ENCODE measurements at regions of chr3 and their contacts with region 1.

Region 1: GRCh38 chr3:9826815-9827567 is 16.8 kb downstream of the RPUSD3 start:
- DNase-seq: peak; percentile 44 to 69
- ATAC-seq: peak; percentile 87 to 93
- H3K4me3 ChIP-seq: no peak overlapping the region
- H3K27ac ChIP-seq: no peak overlapping the region
- H3K4me1 ChIP-seq: no peaks in the 10 kb centered on the region
- CTCF ChIP-seq: peak; percentile 46
- EP300 ChIP-seq: no peak
- POLR2A ChIP-seq: no peak
- RAD21 ChIP-seq: peak; percentile 52 to 67

Region 2: DNA sequence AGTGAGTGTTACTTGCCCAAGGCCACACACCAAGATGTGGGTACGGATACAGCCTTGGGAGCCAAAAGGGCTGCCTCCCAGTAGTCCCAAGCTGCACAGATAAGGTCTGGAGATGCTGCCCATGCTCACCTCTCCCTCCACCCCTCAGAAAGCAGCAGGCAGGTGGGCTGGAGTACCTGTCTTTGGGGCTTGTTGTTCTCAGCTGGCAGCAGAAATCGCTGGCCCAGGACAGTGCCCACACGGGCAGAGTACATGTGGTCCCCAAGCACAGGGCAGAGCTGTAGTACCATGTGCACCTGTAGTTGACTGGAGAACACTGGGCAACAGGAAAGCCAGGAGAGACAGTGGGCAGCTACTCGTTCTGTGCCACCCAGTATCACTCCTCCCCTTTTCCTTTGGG is 11.9 kb after region 1 on chr3:
- CTCF ChIA-PET with region 1: interaction called, 21 read pairs
- POLR2A ChIA-PET with region 1: no interaction called
- DNase-seq: no peak
- ATAC-seq: no peak
- H3K4me3 ChIP-seq: no peak overlapping the region
- H3K27ac ChIP-seq: no peak overlapping the region
- H3K4me1 ChIP-seq: peaks cover 8% of the 10 kb centered on the region; the same call in 2 of the 3 replicates
- CTCF ChIP-seq: no peak
- EP300 ChIP-seq: no peak
- POLR2A ChIP-seq: no peak
- RAD21 ChIP-seq: no peak

Region 3: DNA sequence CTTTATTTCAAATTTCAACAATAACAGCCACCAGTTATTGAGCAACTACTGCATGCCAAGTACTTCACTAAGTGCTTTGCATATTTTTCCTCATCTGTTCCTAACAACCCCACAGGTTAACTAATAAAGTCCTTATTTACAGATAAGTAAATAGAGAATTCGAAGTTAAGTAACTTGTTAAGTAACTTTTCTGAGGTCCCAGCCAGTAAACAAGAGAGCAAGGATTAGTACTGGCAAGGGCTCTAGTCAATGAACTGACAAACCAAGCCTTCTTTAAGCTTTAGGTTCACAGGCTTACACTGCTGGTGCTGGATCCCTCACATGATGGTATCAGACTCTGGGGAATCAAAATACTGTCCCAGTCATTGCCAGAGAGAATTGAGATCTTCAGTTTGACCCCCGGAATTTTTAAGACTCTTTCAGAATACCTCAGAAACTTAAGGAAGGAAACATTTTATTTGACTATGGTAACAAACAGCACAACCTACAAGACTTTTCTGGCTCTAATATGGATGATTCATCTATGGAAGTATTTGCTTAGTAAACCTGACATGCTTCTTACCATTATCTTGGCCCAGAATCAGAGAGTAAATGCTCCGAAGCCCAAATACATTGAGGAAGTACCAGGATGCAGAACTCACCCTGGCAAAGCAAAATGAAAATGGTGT is 143.2 kb after region 1 on chr3:
- CTCF ChIA-PET with region 1: no interaction called
- POLR2A ChIA-PET with region 1: no interaction called
- DNase-seq: peak in 1 of 2 experiments; percentile 55
- ATAC-seq: peak; percentile 90 to 91
- H3K4me3 ChIP-seq: no peak overlapping the region
- H3K27ac ChIP-seq: peak overlapping the region; percentile 62 to 72
- H3K4me1 ChIP-seq: peaks cover 33% of the 10 kb centered on the region
- CTCF ChIP-seq: no peak
- EP300 ChIP-seq: no peak
- POLR2A ChIP-seq: no peak
- RAD21 ChIP-seq: no peak

Region 4: DNA sequence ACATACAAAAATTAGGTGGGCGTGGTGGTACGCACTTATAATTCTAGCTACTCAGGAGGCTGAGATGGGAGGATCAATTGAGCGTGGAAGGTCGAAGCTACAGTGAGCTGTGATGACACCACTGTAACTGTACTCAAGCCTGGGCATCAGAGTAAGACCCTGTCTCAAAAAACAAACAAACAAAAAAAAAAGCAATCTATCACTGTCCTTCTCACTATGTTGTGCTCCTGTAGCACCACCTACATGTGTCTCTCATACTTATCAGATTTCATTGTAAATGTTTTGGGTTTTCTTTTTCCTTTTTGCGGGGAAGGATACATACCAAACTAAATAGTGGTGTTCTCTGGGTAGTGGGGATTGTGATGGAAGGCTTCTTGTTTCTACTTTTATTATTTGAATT is 214.0 kb after region 1 on chr3:
- CTCF ChIA-PET with region 1: no interaction called
- POLR2A ChIA-PET with region 1: no interaction called
- DNase-seq: no peak
- ATAC-seq: no peak
- H3K4me3 ChIP-seq: no peak overlapping the region
- H3K27ac ChIP-seq: no peak overlapping the region
- H3K4me1 ChIP-seq: no peaks in the 10 kb centered on the region
- CTCF ChIP-seq: no peak
- EP300 ChIP-seq: no peak
- POLR2A ChIP-seq: no peak
- RAD21 ChIP-seq: no peak

Measured in A549 (cell line).